ENCODE measurements at regions of chr3 and their contacts with region 1.

Region 1: DNA sequence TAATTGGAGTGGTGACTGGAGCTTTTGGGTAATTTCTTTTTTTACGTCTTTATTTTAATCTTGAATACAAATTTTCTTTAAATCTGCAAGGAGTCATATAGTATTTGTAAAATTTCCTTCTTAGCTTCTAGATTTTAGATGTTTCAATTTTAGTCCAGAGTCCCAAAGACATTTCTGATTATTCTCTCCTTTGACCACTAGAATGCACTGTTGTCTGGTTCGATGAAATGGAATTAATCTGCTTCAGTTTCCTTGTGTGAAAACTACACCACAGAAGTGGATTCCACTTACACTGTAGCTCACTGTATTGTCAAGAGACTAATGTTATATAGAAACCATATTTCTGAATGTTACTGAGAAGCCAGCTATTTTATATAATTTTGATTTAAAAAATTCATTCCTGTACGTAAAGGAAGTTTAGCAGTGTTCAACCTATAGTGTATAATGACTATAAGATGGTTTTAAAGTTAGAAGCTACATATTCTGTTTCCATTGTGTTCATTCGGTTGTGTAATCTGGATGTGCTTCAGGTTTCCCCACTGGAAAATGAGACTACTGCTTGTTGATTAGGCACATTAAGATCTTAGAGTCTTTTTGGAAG is 6.1 kb downstream of the GRAMD1C start:
- DNase-seq: no peak
- ATAC-seq: peak; percentile 61
- H3K4me3 Mint-ChIP-seq: no peak overlapping the region
- H3K27ac Mint-ChIP-seq: no peak overlapping the region
- H3K4me1 Mint-ChIP-seq: peaks cover 3% of the 10 kb centered on the region
- H3K27me3 Mint-ChIP-seq: no peaks in the 10 kb centered on the region
- CTCF ChIP-seq: no peak

Region 2: GRCh38 chr3:113736548-113737089 is 108.1 kb before region 1 on chr3:
- CTCF ChIA-PET with region 1: interaction called, 22 read pairs
- POLR2A ChIA-PET with region 1: no interaction called
- intact Hi-C with region 1: no loop called
- DNase-seq: no peak
- ATAC-seq: peak; percentile 86
- H3K4me3 Mint-ChIP-seq: no peak overlapping the region
- H3K27ac Mint-ChIP-seq: peak overlapping the region; percentile 76
- H3K4me1 Mint-ChIP-seq: peaks cover 40% of the 10 kb centered on the region
- H3K27me3 Mint-ChIP-seq: no peaks in the 10 kb centered on the region
- CTCF ChIP-seq: no peak

Region 3: DNA sequence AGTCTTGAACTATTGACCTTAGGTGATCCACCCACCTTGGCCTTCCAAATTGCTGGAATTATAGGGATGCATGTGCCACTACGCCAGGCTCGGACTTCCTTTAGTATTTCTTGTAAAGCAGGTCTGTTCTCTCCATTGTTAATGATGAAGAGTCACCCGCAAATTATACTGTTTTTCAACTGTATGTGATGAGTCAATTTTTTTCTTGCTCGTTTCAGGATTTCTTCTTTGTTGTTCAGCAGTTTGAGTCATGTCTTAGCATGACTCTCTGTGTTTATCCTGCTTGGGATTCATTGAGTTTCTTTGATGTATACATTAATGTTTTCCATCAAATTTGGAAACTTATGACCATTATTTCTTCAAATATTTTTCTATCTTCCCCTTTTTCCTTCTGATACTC is 22.8 kb after region 1 on chr3:
- CTCF ChIA-PET with region 1: no interaction called
- POLR2A ChIA-PET with region 1: no interaction called
- intact Hi-C with region 1: no loop called
- DNase-seq: no peak
- ATAC-seq: no peak
- H3K4me3 Mint-ChIP-seq: no peak overlapping the region
- H3K27ac Mint-ChIP-seq: no peak overlapping the region
- H3K4me1 Mint-ChIP-seq: no peaks in the 10 kb centered on the region
- H3K27me3 Mint-ChIP-seq: no peaks in the 10 kb centered on the region
- CTCF ChIP-seq: no peak

Region 4: DNA sequence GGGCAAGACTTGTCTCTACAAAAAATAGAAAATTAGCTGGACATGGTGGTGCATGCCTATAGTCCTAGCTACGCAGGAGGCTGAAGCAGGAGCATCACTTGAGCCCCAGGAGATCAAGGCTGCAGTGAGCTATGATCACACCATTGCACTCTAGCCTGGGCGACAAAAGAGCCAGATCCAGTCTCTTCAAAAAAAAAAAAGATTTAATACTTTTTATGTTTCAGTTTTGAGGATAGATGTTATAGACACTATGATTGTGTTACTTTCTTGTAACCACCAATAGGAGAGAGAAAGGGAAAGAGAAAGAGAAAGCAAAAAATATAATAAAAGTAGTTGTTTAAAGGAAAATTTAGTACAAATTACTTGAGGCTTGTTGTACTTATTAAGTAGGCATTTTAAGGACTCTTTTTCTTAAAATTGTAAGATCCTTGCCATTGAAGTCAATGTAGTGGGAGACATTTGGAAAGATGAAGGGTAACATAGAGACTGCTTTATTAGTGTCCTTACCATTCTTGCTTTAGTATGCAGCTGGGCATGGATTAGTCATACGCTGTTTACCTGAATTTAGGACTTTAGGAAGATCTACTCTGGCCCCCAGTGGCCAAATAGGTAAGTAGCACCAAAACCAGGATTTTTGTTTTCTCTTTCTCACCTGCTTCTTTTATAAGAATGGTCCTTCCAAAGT is 68.0 kb after region 1 on chr3:
- CTCF ChIA-PET with region 1: interaction called, 34 read pairs
- POLR2A ChIA-PET with region 1: no interaction called
- intact Hi-C with region 1: loop called (anchors 1 kb)
- DNase-seq: no peak
- ATAC-seq: peak; percentile 97
- H3K4me3 Mint-ChIP-seq: peak overlapping the region; percentile 42
- H3K27ac Mint-ChIP-seq: no peak overlapping the region
- H3K4me1 Mint-ChIP-seq: peaks cover 6% of the 10 kb centered on the region
- H3K27me3 Mint-ChIP-seq: no peaks in the 10 kb centered on the region
- CTCF ChIP-seq: no peak

Region 5: DNA sequence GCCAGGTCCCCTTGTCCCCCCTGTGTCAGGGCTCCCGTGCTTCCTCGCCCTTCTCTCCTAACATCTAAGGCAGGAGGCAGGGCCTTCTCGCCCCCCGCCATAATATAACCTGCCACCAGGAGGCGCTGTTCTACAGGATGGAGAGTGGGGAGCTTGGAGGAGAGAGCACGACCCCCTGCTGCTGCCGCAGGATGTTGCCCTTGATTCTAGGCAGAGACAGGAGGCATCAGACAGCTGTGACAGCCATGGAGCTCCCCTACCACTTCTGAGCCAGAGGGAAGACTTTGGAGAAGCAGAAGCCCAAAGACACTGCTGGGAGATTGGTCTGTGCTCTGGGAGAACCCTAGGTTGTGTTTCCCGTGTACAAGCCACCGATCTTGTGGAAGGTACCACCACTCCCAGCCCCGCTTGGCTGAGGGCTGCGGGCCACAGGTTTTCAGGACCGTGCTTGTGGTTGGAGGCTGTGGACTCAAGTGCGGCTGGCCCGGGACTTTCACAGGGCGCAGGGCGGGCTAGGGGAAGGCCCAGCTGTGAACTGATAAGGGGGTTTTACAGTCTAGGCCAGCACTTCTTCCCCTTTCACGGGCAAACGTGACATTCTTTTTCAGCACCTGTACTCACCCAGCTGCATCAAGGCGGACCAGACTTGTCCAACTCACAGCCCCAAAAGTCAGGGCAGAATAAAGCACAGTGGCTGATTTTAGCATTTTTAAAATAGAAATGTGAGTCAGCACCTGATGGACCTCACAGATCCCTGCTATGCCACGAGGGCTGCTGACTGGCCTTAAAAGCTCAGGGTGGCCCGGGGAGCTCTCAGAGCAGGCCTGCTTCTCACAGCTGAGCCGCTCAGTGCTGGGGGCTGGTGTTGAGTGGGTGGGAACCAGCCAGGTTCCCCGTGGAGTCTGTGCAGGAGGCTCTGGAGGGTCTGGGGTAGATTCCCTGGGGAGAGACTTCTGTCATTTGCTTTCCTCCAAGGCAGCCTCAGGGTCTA is 446.5 kb after region 1 on chr3:
- CTCF ChIA-PET with region 1: no interaction called
- POLR2A ChIA-PET with region 1: no interaction called
- intact Hi-C with region 1: no loop called
- DNase-seq: peak; percentile 88
- ATAC-seq: peak; percentile 85
- H3K4me3 Mint-ChIP-seq: peak overlapping the region; percentile 71
- H3K27ac Mint-ChIP-seq: peak overlapping the region; percentile 98
- H3K4me1 Mint-ChIP-seq: peaks cover 47% of the 10 kb centered on the region
- H3K27me3 Mint-ChIP-seq: no peaks in the 10 kb centered on the region
- CTCF ChIP-seq: peak; percentile 83

Measured in activated B cell treated with CpG ODN at 0.5 μM for 24 hours (primary cell).